Activated CD4-positive, alpha-beta T cell treated with anti-CD3 and anti-CD28 coated beads, Interleukin-2, amount 10 ng/mL, durations not matched to agents 24 days and 14 days (primary cell): ENCODE measurements at regions of chr14 and their contacts with region 1.

Region 1: GRCh38 chr14:51996148-51996746 is 6.9 kb downstream of the RTRAF start:
- DNase-seq: peak; percentile 75
- H3K4me3 Mint-ChIP-seq: no peak overlapping the region
- H3K27ac Mint-ChIP-seq: no peak overlapping the region
- H3K4me1 Mint-ChIP-seq: peaks cover 13% of the 10 kb centered on the region
- H3K27me3 Mint-ChIP-seq: no peaks in the 10 kb centered on the region

Region 2: DNA sequence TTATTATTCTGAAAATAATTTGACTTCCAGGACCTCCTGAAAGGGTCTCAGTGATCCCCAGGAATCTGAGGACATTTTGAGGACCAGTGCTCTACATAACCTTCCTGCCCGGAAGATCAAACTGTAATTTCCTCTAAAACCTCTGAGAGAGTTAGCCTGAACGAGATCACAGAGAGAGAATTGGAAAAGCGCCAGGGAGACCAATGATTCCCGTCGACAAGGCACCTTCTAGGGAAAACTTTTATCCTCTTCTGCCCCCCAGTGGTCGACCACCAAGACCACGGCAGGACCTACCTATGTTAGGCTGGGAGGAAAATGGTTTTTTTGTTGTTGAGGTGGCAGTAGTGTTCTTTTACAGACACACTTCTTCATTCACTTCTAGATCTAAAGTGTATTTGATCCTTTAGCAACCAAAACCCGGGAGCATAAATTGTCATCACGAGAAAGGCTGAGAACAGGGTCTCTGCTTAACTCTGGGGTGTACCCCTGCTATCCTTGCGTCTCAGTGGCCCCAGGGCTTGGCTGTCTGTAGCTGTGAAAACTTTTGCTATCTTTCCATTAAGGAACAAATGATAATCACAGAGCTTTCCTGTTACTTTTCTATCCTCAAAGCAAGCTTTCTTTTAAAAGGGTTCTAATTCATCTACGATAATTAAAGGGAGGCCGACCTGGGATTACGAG is 135.5 kb after region 1 on chr14:
- intact Hi-C with region 1: loop called (anchors 5 kb)
- DNase-seq: peak; percentile 71
- H3K4me3 Mint-ChIP-seq: no peak overlapping the region
- H3K27ac Mint-ChIP-seq: no peak overlapping the region
- H3K4me1 Mint-ChIP-seq: peaks cover 3% of the 10 kb centered on the region
- H3K27me3 Mint-ChIP-seq: peaks cover 15% of the 10 kb centered on the region

Region 3: GRCh38 chr14:52272375-52272774 is 276.1 kb after region 1 on chr14:
- intact Hi-C with region 1: loop called (anchors 5 kb)
- DNase-seq: peak; percentile 75
- H3K4me3 Mint-ChIP-seq: no peak overlapping the region
- H3K27ac Mint-ChIP-seq: no peak overlapping the region
- H3K4me1 Mint-ChIP-seq: peaks cover 20% of the 10 kb centered on the region
- H3K27me3 Mint-ChIP-seq: peaks cover 69% of the 10 kb centered on the region

Region 4: DNA sequence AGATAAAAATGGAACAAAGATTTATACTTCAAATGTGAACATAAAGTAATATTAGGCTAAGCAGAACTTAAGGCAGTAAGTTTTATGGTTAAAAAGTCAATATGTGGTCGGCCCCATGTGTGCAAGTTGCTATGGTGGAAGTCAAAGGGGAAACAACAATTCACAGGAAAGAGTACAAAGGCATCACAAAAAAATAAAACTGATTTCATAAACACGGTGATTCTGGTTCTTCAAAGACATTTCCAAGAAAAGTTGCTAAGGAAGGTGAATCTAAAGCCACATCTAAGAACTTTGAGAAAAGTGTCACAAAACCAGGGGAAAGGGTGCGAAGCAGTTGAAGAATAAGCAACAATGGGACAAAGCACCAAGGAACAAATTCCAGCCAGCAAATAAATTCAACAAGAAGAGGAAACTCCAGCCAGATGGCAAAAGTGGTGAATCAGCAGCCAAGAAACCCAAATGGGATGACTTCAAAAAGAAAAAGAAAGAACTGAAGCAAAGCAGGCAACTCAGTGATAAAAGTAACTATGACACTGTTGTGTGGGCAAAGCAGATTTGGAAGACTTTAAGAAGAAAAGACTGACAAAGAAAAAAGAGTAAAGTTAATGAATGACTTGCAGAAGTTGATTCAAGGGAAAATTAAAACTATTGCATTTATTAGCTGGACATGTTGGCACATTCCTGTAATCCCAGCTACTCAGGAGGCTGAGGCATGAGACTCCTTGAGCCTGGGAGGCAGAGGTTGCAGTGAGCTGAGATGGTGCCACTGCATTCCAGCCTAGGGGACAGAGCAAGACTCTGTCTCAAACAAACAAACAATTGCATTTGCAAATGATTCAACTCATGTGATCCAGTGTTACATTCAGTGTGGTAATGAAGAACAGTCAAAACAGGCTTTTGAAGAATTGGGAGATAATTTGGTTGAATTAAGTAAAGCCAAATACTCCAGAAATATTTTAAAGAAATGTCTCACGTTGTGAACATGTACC is 290.7 kb after region 1 on chr14:
- intact Hi-C with region 1: no loop called
- DNase-seq: peak; percentile 84
- H3K4me3 Mint-ChIP-seq: peak overlapping the region; percentile 69
- H3K27ac Mint-ChIP-seq: peak overlapping the region; percentile 87
- H3K4me1 Mint-ChIP-seq: peaks cover 39% of the 10 kb centered on the region
- H3K27me3 Mint-ChIP-seq: peaks cover 6% of the 10 kb centered on the region

Region 5: GRCh38 chr14:52473557-52473956 is 477.3 kb after region 1 on chr14:
- intact Hi-C with region 1: loop called (anchors 5 kb)
- DNase-seq: peak; percentile 69
- H3K4me3 Mint-ChIP-seq: no peak overlapping the region
- H3K27ac Mint-ChIP-seq: no peak overlapping the region
- H3K4me1 Mint-ChIP-seq: peaks cover 21% of the 10 kb centered on the region
- H3K27me3 Mint-ChIP-seq: no peaks in the 10 kb centered on the region